ENCODE measurements at regions of chr2 and their contacts with region 1.

Region 1: DNA sequence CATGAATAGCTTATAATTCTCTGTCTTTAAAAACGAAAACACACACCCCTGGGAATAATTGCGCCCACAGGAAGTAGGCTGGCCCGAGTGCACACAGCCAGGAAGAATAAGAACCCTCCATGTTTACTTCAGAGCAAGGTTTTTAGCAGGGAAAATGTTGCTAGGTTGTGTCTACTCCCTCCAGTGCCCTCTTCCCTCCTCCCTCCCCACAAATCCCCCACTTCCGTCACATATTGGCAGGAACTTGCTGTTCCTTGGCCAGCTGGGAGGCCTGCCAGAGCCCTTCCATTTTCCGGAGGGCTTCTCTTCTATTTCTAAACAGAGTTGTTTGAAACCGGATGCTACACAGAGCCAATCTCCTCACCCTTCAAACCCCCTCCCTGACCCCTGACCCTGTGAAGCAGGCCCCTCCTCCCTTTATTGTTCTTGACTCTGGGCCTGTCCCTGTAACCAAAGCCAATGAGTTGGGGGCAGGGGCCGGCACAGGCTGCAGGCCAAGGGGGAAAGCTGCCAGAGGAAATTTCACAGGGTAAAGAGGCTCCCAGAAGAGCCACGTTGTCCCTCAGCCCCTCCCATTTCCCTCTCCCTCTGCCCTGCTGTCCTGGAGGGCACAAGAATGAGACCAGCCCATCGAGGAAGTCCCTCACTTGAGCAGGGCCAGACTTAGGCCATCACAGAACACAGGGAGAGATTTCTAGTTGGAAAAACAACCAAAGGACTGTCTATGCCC is 49.8 kb upstream of the LGALSL start:
- DNase-seq: peak; percentile 89 to 91
- ATAC-seq: peak; percentile 88
- H3K4me3 ChIP-seq: no peak overlapping the region
- H3K27ac ChIP-seq: peak overlapping the region; percentile 51 to 85
- H3K4me1 ChIP-seq: peaks cover 0 to 6% of the 10 kb centered on the region in 2 donors
- H3K27me3 ChIP-seq: no peaks in the 10 kb centered on the region

Region 2: GRCh38 chr2:64349131-64349530 is 55.0 kb before region 1 on chr2:
- intact Hi-C with region 1: no loop called
- DNase-seq: no peak
- ATAC-seq: no peak
- H3K4me3 ChIP-seq: no peak overlapping the region
- H3K27ac ChIP-seq: no peak overlapping the region
- H3K4me1 ChIP-seq: no peaks in the 10 kb centered on the region
- H3K27me3 ChIP-seq: no peaks in the 10 kb centered on the region

Region 3: GRCh38 chr2:64359892-64360657 is 44.1 kb before region 1 on chr2:
- intact Hi-C with region 1: loop called (anchors 5 kb)
- DNase-seq: peak; percentile 93 to 94
- ATAC-seq: peak; percentile 93
- H3K4me3 ChIP-seq: no peak overlapping the region
- H3K27ac ChIP-seq: peak overlapping the region; percentile 16 to 18
- H3K4me1 ChIP-seq: no peaks in the 10 kb centered on the region
- H3K27me3 ChIP-seq: no peaks in the 10 kb centered on the region

Region 4: GRCh38 chr2:64548761-64549160 is 144.6 kb after region 1 on chr2:
- intact Hi-C with region 1: no loop called
- DNase-seq: no peak
- ATAC-seq: no peak
- H3K4me3 ChIP-seq: no peak overlapping the region
- H3K27ac ChIP-seq: no peak overlapping the region
- H3K4me1 ChIP-seq: peaks cover 0 to 5% of the 10 kb centered on the region in 2 donors
- H3K27me3 ChIP-seq: no peaks in the 10 kb centered on the region

Measured in aorta (tissue), 5 donors.